Right ventricle myocardium inferior (tissue), 1 donor: ENCODE measurements at regions of chr6 and their contacts with region 1.

Region 1: GRCh38 chr6:132962936-132963868 is 148.8 kb downstream of the RPS12 start:
- DNase-seq: no peak
- ATAC-seq: peak; percentile 77

Region 2: DNA sequence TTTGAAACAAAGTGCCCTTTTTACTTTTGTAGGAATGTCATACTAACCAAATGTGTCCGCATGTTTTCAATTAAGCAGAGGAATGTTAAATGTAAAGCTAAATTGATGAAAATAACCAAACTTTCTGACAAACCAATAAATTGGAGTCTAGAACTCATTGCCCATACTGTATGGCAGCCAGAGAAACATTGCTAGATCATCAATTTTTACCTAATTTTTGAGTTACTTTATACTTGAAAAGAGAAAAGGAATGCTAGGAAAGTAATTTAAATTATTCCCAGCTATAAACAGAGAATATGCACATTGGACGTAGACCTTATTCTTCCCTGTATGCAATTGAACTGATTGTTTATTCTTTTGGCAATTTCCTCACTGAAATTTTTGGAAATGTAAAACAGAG is 104.5 kb before region 1 on chr6:
- intact Hi-C with region 1: no loop called
- DNase-seq: no peak
- ATAC-seq: no peak

Region 3: GRCh38 chr6:133040094-133040802 is 77.0 kb after region 1 on chr6:
- intact Hi-C with region 1: loop called (anchors 5 kb)
- DNase-seq: no peak
- ATAC-seq: no peak

Region 4: DNA sequence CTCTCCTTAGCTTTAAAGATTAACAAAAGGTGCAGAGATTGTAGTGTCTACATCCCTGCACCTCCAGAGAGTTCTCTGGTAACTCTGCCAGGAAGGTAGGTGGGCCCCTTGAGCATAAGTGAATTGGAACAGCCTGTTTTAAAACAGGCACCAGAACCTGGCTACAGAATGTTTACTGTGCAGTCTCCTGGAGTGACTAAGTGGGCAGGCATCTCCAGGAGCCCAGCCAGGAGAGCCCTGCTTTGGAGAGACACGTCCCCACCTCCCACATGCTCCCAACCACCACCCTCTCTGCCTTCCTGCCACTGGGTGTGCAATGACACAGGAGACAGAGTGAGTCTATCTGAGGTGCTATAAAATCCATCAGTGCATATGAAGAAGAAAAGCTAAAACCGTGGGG is 167.7 kb after region 1 on chr6:
- intact Hi-C with region 1: loop called (anchors 5 kb)
- DNase-seq: peak; percentile 75
- ATAC-seq: peak; percentile 97

Region 5: DNA sequence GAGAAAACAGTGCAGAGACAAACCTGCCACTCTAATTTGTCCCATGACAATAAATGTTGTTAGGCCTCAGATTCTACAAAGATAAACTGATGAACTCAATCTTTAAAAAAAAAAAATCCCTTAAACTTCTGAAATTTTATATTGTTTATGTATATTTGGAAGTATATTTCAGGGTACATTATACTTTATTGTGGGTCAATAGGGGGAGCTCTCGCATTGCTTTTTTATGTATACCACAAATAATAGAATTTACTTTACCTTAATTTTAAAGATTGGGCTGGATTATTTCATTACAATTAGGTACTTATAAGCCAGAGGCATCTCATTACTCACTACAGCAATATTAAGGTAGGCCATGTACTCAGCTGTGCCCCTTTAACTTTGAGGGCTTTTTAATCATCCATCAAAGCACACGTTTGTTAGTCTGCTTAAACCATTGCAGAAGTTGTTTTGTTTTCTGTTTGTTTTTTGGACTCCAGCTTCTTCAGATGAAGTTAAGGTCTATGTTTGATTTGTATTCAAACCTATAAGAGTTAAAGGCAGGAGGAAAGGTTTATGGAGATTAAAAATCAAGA is 221.7 kb after region 1 on chr6:
- intact Hi-C with region 1: loop called (anchors 10 kb)
- DNase-seq: no peak
- ATAC-seq: no peak

Region 6: GRCh38 chr6:133512410-133513016 is 549.3 kb after region 1 on chr6:
- intact Hi-C with region 1: loop called (anchors 5 kb)
- DNase-seq: no peak
- ATAC-seq: no peak

Region 7: GRCh38 chr6:133553652-133554051 is 590.5 kb after region 1 on chr6:
- intact Hi-C with region 1: loop called (anchors 2 kb)
- DNase-seq: no peak
- ATAC-seq: no peak